HAP-1 (cell line): ENCODE measurements at regions of chr3 and their contacts with region 1.

Region 1: DNA sequence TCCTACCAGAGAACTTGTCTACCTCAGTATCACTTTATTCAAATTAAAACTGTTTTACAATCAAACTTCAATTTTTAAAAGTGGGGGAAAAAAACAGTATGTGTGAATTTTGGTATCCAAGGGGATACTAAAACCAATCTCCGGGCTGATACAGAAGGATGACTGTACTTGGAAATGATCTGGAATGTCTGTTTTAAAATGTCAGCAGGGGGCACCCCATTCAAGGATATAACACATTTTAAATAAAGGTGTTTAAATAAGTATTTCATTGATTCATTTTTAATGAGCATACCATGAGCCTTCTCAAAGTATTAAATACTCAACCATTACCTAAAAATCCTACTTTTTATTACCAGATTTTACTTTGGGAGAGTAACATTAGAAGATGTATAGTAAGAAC is 67.9 kb downstream of the ULK4 start:
- DNase-seq: peak; percentile 40 to 44
- H3K4me3 ChIP-seq: no peak overlapping the region
- H3K4me1 ChIP-seq: no peaks in the 10 kb centered on the region
- H3K27me3 ChIP-seq: no peaks in the 10 kb centered on the region

Region 2: GRCh38 chr3:42101048-42101447 is 207.1 kb after region 1 on chr3:
- in situ Hi-C with region 1: loop called (anchors 5 kb)
- DNase-seq: no peak
- H3K4me3 ChIP-seq: no peak overlapping the region
- H3K4me1 ChIP-seq: no peaks in the 10 kb centered on the region; the same call in 1 of the 2 replicates
- H3K27me3 ChIP-seq: no peaks in the 10 kb centered on the region